HEK293 (cell line): ENCODE measurements at regions of chr3 and their contacts with region 1.

Region 1: GRCh38 chr3:56251343-56251945 is 216.8 kb downstream of the ERC2 start:
- H3K4me3 ChIP-seq: no peak overlapping the region
- H3K27ac ChIP-seq: no peak overlapping the region
- H3K4me1 ChIP-seq: no peaks in the 10 kb centered on the region
- CTCF ChIP-seq: no peak

Region 2: GRCh38 chr3:55951388-55951787 is 300.1 kb before region 1 on chr3:
- CTCF ChIA-PET with region 1: no interaction called
- POLR2A ChIA-PET with region 1: no interaction called
- H3K4me3 ChIP-seq: no peak overlapping the region
- H3K27ac ChIP-seq: no peak overlapping the region
- H3K4me1 ChIP-seq: no peaks in the 10 kb centered on the region
- CTCF ChIP-seq: no peak

Region 3: DNA sequence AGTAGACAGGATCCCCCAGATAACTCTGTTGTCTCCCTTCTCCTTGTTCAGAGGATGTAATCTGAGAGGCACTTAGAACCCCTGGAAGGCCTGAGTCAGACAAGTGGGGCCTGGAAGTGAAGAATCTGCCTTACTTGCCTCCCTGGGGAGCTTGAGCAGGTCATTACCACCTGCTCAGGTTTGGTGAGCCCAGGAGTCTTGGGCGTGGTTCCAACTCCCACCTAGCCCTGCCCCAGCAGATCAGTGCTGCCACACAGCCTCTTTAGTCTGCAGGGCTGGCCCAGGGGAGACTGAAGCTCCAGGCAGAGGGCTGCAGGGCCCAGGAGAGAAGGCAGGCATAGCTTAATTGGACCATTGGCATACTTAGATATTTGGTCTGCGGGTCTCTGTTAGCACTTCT is 13.1 kb before region 1 on chr3:
- CTCF ChIA-PET with region 1: interaction called, 18 read pairs
- POLR2A ChIA-PET with region 1: no interaction called
- H3K4me3 ChIP-seq: no peak overlapping the region
- H3K27ac ChIP-seq: no peak overlapping the region
- H3K4me1 ChIP-seq: peaks cover 7% of the 10 kb centered on the region
- CTCF ChIP-seq: no peak

Region 4: GRCh38 chr3:56269755-56270535 is 18.5 kb after region 1 on chr3:
- CTCF ChIA-PET with region 1: interaction called, 12 read pairs
- POLR2A ChIA-PET with region 1: no interaction called
- H3K4me3 ChIP-seq: no peak overlapping the region
- H3K27ac ChIP-seq: no peak overlapping the region
- H3K4me1 ChIP-seq: no peaks in the 10 kb centered on the region
- CTCF ChIP-seq: no peak